ENCODE measurements at regions of chr4 and their contacts with region 1.

Region 1: DNA sequence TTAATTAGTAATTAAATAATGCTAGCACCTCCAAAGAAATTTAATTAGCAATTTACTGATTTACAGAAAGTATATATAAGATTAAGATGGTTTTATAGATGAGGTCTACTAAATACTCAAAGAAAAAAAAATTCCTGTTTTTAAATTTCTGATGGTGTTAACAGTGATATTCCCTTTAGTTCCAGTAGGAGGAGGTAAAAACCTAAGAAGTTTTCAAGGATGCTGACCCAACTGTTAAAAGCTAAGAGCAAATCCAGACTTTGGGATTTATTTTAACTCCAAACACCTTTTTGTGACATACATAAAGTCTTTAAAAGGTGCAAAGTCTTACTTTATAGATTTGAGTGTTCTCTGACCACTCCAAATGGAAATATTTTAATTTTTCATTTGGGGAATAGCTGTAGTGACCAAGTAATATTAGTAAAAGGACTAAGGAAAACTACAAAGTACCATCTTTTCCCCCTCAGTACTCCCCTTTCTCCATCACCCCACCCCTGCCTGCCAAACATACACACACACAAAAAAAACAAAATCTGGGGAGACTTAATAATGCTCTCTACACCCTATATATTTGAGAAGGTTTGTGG is 34.2 kb upstream of the CSN1S1 start:
- DNase-seq: no peak
- H3K4me3 Mint-ChIP-seq: no peak overlapping the region
- H3K27ac Mint-ChIP-seq: no peak overlapping the region
- H3K4me1 Mint-ChIP-seq: peaks cover 23% of the 10 kb centered on the region
- H3K27me3 Mint-ChIP-seq: no peaks in the 10 kb centered on the region
- CTCF ChIP-seq: no peak

Region 2: GRCh38 chr4:69689599-69689998 is 207.0 kb before region 1 on chr4:
- CTCF ChIA-PET with region 1: no interaction called
- intact Hi-C with region 1: no loop called
- DNase-seq: peak; percentile 9
- H3K4me3 Mint-ChIP-seq: no peak overlapping the region
- H3K27ac Mint-ChIP-seq: no peak overlapping the region
- H3K4me1 Mint-ChIP-seq: peaks cover 6% of the 10 kb centered on the region
- H3K27me3 Mint-ChIP-seq: no peaks in the 10 kb centered on the region
- CTCF ChIP-seq: peak; percentile 28

Region 3: GRCh38 chr4:69764311-69764710 is 132.3 kb before region 1 on chr4:
- CTCF ChIA-PET with region 1: no interaction called
- intact Hi-C with region 1: no loop called
- DNase-seq: no peak
- H3K4me3 Mint-ChIP-seq: no peak overlapping the region
- H3K27ac Mint-ChIP-seq: no peak overlapping the region
- H3K4me1 Mint-ChIP-seq: peaks cover 12% of the 10 kb centered on the region
- H3K27me3 Mint-ChIP-seq: no peaks in the 10 kb centered on the region
- CTCF ChIP-seq: no peak

Region 4: GRCh38 chr4:70183168-70183939 is 286.7 kb after region 1 on chr4:
- CTCF ChIA-PET with region 1: interaction called, 8 read pairs
- intact Hi-C with region 1: loop called (anchors 1 kb)
- DNase-seq: peak; percentile 60
- H3K4me3 Mint-ChIP-seq: peak overlapping the region; percentile 39
- H3K27ac Mint-ChIP-seq: peak overlapping the region; percentile 85
- H3K4me1 Mint-ChIP-seq: peaks cover 59% of the 10 kb centered on the region
- H3K27me3 Mint-ChIP-seq: no peaks in the 10 kb centered on the region
- CTCF ChIP-seq: peak; percentile 39

Region 5: DNA sequence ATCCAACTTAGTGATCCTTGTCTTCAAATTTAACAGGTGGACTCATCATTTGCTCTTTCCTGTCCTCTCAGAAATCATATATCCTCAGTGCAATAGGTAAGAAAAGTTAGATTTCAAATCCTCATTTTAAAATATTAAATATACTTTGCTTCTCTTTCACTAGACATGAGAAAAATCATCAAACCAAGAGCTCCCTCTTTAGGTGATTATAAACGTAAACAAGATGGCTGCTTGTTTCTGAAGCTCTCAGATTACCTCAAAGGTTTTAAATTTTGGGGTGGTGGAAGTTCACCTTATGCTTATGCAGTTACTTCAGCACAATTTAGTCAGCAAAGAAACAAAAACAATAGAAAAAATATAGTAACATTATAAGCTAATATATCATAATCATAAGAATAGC is 373.1 kb after region 1 on chr4:
- CTCF ChIA-PET with region 1: interaction called, 4 read pairs
- intact Hi-C with region 1: loop called (anchors 1 kb)
- DNase-seq: no peak
- H3K4me3 Mint-ChIP-seq: no peak overlapping the region
- H3K27ac Mint-ChIP-seq: no peak overlapping the region
- H3K4me1 Mint-ChIP-seq: peaks cover 8% of the 10 kb centered on the region
- H3K27me3 Mint-ChIP-seq: no peaks in the 10 kb centered on the region
- CTCF ChIP-seq: no peak

Region 6: DNA sequence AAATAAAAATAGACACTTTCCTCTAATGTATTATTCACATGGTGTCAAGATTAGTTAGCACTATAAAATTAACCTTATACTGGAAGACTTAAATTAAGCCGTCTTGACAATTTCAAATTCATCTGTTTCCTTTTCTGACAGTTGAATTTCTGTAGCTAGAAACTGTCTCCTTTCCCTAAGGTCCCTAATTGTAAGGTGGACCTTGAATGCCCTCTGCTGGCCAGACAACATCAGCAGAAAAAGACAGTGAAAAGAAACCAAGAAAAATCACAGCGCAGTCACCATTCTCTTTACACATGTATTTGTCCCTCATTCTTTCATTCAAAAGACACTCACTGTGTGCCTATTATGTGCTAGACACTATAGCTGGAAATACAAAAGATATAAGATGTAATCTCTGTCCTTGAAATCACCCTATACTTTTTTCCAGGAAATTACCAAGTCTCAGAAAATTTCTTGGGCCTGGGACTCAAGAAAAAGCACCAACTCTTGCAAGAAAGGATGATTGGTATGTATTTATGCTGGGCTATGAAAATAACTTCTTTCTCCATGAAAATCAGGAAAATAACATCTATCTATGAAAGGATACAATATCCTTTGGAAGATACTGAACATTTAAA is 662.7 kb after region 1 on chr4:
- CTCF ChIA-PET with region 1: interaction called, 4 read pairs
- intact Hi-C with region 1: loop called (anchors 2 kb)
- DNase-seq: peak; percentile 53
- H3K4me3 Mint-ChIP-seq: peak overlapping the region; percentile 50
- H3K27ac Mint-ChIP-seq: peak overlapping the region; percentile 60
- H3K4me1 Mint-ChIP-seq: peaks cover 8% of the 10 kb centered on the region
- H3K27me3 Mint-ChIP-seq: no peaks in the 10 kb centered on the region
- CTCF ChIP-seq: peak; percentile 36